Motor neuron (in vitro differentiated cells): ENCODE measurements at regions of chr16 and their contacts with region 1.

Region 1: GRCh38 chr16:57084257-57084770 is 8.1 kb upstream of the CPNE2 start:
- ATAC-seq: peak; percentile 52 to 88 (median 78)
- H3K4me3 ChIP-seq: no peak overlapping the region
- H3K27ac ChIP-seq: no peak overlapping the region
- H3K4me1 ChIP-seq: no peaks in the 10 kb centered on the region

Region 2: DNA sequence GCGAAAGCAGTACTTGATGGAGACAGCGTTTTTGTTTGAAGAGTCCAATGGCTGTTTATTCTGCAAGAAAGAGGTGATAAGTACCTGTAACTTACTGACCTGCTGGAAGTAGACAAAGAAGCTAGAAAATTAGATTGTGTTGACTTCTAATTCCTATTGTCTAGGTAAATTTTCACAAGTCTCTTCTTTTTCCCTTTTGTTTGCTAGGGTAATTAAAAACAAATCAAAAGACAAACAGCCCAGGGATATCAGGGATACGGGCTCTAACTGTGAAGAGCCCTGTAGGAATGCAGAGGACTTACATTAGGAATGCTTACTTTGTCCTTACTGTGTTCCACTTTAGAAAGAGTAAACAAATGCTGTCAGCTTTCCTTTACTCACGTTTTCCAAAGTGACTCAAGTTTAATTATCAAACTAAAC is 94.5 kb after region 1 on chr16:
- in situ Hi-C with region 1: loop called in 1 of 9 experiments (anchors 10 kb)
- ATAC-seq: peak in 4 of 8 experiments; percentile 15 to 83 (median 54)
- H3K4me3 ChIP-seq: no peak overlapping the region
- H3K27ac ChIP-seq: no peak overlapping the region
- H3K4me1 ChIP-seq: peaks cover 0 to 10% of the 10 kb centered on the region in 2 donors

Region 3: DNA sequence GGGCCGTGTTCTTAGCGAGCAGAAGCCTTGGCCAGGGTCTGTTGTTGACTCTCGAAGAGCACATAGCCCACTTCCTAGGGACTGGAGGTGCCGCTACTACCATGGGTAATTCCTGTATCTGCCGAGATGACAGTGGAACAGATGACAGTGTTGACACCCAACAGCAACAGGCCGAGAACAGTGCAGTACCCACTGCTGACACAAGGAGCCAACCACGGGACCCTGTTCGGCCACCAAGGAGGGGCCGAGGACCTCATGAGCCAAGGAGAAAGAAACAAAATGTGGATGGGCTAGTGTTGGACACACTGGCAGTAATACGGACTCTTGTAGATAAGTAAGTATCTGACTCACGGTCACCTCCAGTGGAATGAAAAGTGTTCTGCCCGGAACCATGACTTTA is 120.4 kb after region 1 on chr16:
- in situ Hi-C with region 1: no loop called
- ATAC-seq: no peak
- H3K4me3 ChIP-seq: no peak overlapping the region
- H3K27ac ChIP-seq: no peak overlapping the region
- H3K4me1 ChIP-seq: no peaks in the 10 kb centered on the region